GM12878 (cell line): ENCODE measurements at regions of chr1 and their contacts with region 1.

Region 1: DNA sequence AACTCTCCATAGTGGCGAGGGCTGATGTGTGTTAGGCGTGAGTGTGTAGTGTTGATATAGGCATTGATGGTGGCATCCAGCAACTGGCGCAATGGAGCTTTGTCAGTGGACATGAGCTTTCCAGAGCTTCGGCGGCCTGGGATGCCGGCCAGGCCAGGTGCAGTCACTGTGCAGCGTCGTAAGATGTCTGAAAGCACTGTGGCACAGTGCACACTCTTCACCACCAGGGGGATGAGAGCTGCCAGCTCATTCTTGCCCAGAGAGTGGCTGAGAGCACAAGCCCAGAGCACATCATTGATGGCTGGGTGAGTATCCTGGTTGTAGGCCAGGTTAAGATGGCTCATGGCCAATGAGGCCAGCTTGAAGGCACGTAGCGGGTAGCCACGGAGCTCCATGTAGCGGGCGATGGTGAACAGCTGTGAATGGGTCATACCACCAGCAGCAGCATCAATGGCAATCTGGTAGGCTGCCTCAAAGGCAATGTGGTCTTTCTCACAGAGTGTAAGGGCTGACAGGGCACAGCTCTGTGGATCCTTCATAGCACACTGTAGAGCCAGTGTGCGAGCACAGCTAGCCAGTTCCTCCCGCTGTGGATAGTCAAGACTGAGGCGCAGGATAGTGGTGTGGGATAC is 6.7 kb downstream of the UROD start:
- DNase-seq: no peak
- ATAC-seq: peak; percentile 93
- H3K4me3 ChIP-seq: no peak overlapping the region
- H3K27ac ChIP-seq: no peak overlapping the region
- H3K4me1 ChIP-seq: no peaks in the 10 kb centered on the region
- H3K27me3 ChIP-seq: no peaks in the 10 kb centered on the region
- CTCF ChIP-seq: peak; percentile 71 to 87 (median 84)
- EP300 ChIP-seq: no peak
- POLR2A ChIP-seq: no peak
- RAD21 ChIP-seq: peak; percentile 87

Region 2: GRCh38 chr1:44970317-44970716 is 48.4 kb before region 1 on chr1:
- CTCF ChIA-PET with region 1: no interaction called
- POLR2A ChIA-PET with region 1: no interaction called
- RAD21 ChIA-PET with region 1: no interaction called
- SMC1A ChIA-PET with region 1: no interaction called
- in situ Hi-C with region 1: no loop called
- intact Hi-C with region 1: no loop called
- DNase-seq: no peak
- ATAC-seq: no peak
- H3K4me3 ChIP-seq: no peak overlapping the region
- H3K27ac ChIP-seq: no peak overlapping the region
- H3K4me1 ChIP-seq: peaks cover 5% of the 10 kb centered on the region; the same call in 1 of the 2 replicates
- H3K27me3 ChIP-seq: no peaks in the 10 kb centered on the region
- CTCF ChIP-seq: no peak
- EP300 ChIP-seq: no peak
- POLR2A ChIP-seq: no peak
- RAD21 ChIP-seq: no peak

Region 3: DNA sequence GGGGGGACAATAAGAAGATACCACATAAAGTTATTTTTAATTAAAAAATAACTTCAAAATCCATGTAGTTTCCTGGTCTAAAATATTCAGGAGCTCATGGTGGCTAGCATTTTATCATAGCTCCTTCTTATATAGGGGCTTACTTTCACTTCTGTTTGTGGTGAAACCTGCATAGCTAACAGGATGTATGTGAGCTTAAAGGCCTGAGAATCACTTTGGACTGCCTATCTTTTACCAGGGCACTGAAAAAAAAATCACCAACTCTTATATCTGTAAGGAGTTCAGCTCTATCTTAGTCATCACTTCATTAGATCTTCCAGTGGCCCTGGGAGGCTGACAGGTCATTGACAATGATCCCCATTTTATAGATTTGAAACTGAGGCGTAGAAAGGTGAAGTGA is 14.6 kb after region 1 on chr1:
- CTCF ChIA-PET with region 1: interaction called, 6 read pairs
- POLR2A ChIA-PET with region 1: interaction called, 3 read pairs
- RAD21 ChIA-PET with region 1: interaction called, 15 read pairs
- SMC1A ChIA-PET with region 1: interaction called, 7 read pairs
- in situ Hi-C with region 1: no loop called
- intact Hi-C with region 1: no loop called
- DNase-seq: no peak
- ATAC-seq: peak; percentile 87
- H3K4me3 ChIP-seq: no peak overlapping the region
- H3K27ac ChIP-seq: no peak overlapping the region
- H3K4me1 ChIP-seq: peaks cover 4% of the 10 kb centered on the region
- H3K27me3 ChIP-seq: no peaks in the 10 kb centered on the region
- CTCF ChIP-seq: no peak
- EP300 ChIP-seq: no peak
- POLR2A ChIP-seq: no peak
- RAD21 ChIP-seq: no peak

Region 4: DNA sequence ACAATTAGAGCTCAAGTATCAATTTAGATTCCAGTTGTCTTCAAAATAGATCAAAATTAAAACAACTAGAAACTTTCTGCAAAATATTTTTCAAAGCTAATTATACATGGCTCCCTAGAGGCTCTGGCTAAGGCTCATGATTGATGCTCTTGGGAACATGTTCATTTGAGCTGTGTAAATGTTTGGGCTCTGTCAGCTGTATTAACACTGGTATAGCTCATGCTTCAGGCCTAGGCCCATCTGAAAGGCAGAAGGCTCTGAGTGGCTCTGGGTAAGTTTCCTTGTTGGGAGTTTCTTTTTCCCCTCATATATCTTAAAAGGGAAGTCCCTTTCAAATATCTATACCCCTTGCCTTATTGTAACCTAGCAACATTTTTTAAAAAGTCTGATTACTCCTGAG is 74.6 kb after region 1 on chr1:
- CTCF ChIA-PET with region 1: interaction called, 4 read pairs
- POLR2A ChIA-PET with region 1: no interaction called
- RAD21 ChIA-PET with region 1: no interaction called
- SMC1A ChIA-PET with region 1: interaction called, 11 read pairs
- in situ Hi-C with region 1: no loop called
- intact Hi-C with region 1: no loop called
- DNase-seq: no peak
- ATAC-seq: no peak
- H3K4me3 ChIP-seq: no peak overlapping the region
- H3K27ac ChIP-seq: no peak overlapping the region
- H3K4me1 ChIP-seq: no peaks in the 10 kb centered on the region
- H3K27me3 ChIP-seq: no peaks in the 10 kb centered on the region
- CTCF ChIP-seq: no peak
- EP300 ChIP-seq: no peak
- POLR2A ChIP-seq: no peak
- RAD21 ChIP-seq: no peak

Region 5: GRCh38 chr1:45122724-45123123 is 104.0 kb after region 1 on chr1:
- CTCF ChIA-PET with region 1: no interaction called
- POLR2A ChIA-PET with region 1: no interaction called
- RAD21 ChIA-PET with region 1: no interaction called
- SMC1A ChIA-PET with region 1: no interaction called
- in situ Hi-C with region 1: no loop called
- intact Hi-C with region 1: no loop called
- DNase-seq: no peak
- ATAC-seq: no peak
- H3K4me3 ChIP-seq: no peak overlapping the region
- H3K27ac ChIP-seq: no peak overlapping the region
- H3K4me1 ChIP-seq: no peaks in the 10 kb centered on the region
- H3K27me3 ChIP-seq: no peaks in the 10 kb centered on the region
- CTCF ChIP-seq: no peak
- EP300 ChIP-seq: no peak
- POLR2A ChIP-seq: no peak
- RAD21 ChIP-seq: no peak

Region 6: GRCh38 chr1:45152126-45152525 is 133.4 kb after region 1 on chr1:
- CTCF ChIA-PET with region 1: no interaction called
- POLR2A ChIA-PET with region 1: no interaction called
- RAD21 ChIA-PET with region 1: no interaction called
- SMC1A ChIA-PET with region 1: no interaction called
- in situ Hi-C with region 1: no loop called
- intact Hi-C with region 1: no loop called
- DNase-seq: no peak
- ATAC-seq: no peak
- H3K4me3 ChIP-seq: no peak overlapping the region
- H3K27ac ChIP-seq: no peak overlapping the region
- H3K4me1 ChIP-seq: no peaks in the 10 kb centered on the region
- H3K27me3 ChIP-seq: no peaks in the 10 kb centered on the region
- CTCF ChIP-seq: no peak
- EP300 ChIP-seq: no peak
- POLR2A ChIP-seq: no peak
- RAD21 ChIP-seq: no peak

Region 7: GRCh38 chr1:45211076-45211475 is 192.4 kb after region 1 on chr1:
- CTCF ChIA-PET with region 1: no interaction called
- POLR2A ChIA-PET with region 1: no interaction called
- RAD21 ChIA-PET with region 1: no interaction called
- SMC1A ChIA-PET with region 1: no interaction called
- in situ Hi-C with region 1: no loop called
- intact Hi-C with region 1: no loop called
- DNase-seq: no peak
- ATAC-seq: no peak
- H3K4me3 ChIP-seq: no peak overlapping the region
- H3K27ac ChIP-seq: no peak overlapping the region
- H3K4me1 ChIP-seq: no peaks in the 10 kb centered on the region
- H3K27me3 ChIP-seq: peaks cover 0 to 5% of the 10 kb centered on the region in 2 experiments; a peak in 3 of 4 replicates
- CTCF ChIP-seq: no peak
- EP300 ChIP-seq: no peak
- POLR2A ChIP-seq: no peak
- RAD21 ChIP-seq: no peak

Region 8: GRCh38 chr1:45291716-45292115 is 273.0 kb after region 1 on chr1:
- CTCF ChIA-PET with region 1: interaction called, 252 read pairs
- POLR2A ChIA-PET with region 1: interaction called, 3 read pairs
- RAD21 ChIA-PET with region 1: interaction called, 313 read pairs
- SMC1A ChIA-PET with region 1: interaction called, 284 read pairs
- in situ Hi-C with region 1: no loop called
- intact Hi-C with region 1: no loop called
- DNase-seq: no peak
- ATAC-seq: no peak
- H3K4me3 ChIP-seq: no peak overlapping the region
- H3K27ac ChIP-seq: no peak overlapping the region
- H3K4me1 ChIP-seq: no peaks in the 10 kb centered on the region
- H3K27me3 ChIP-seq: no peaks in the 10 kb centered on the region
- CTCF ChIP-seq: no peak
- EP300 ChIP-seq: no peak
- POLR2A ChIP-seq: no peak
- RAD21 ChIP-seq: no peak